ENCODE measurements at regions of chr10 and their contacts with region 1.

Region 1: DNA sequence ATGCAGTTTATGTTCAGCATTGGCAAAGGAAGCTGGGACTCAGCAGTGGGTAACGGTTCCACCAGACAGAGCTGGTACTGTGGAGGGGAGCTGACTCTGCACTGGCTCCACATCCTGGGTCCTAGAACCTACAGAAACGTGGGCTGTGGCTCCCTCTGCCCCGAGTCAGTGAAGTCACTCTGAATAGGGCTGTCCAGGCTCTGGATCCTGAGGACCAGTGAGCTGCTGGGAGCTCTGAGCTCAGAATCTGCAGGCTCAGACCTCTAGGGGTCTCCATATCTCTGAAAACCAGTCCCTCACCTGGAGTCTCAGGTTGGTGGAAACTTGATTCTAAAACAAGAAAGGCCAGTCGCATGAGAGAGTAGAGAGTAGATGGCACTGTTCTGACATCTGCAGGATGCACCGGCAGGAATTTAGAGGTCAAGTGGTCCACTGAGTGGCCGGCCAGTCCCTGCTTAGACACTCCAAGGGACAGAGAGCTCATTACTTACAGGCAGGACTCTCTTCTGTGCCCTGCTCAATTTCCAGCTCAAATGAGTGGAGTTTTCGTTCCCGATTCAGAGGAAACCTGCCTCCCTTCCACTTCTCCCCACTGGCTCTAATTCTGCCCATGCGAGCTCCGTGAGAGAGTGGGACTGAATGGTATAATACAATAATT is 18.6 kb downstream of the NPFFR1 start:
- DNase-seq: no peak
- ATAC-seq: peak; percentile 63

Region 2: GRCh38 chr10:70331486-70332268 is 66.5 kb after region 1 on chr10:
- intact Hi-C with region 1: loop called (anchors 2 kb)
- DNase-seq: peak; percentile 70
- ATAC-seq: peak; percentile 89

Region 3: GRCh38 chr10:70537344-70538209 is 272.4 kb after region 1 on chr10:
- intact Hi-C with region 1: no loop called
- DNase-seq: peak; percentile 51
- ATAC-seq: no peak